Activated B cell treated with CpG ODN at 0.5 μM for 24 hours (primary cell): ENCODE measurements at regions of chr16 and their contacts with region 1.

Region 1: GRCh38 chr16:71894921-71895678 is at the start of gene IST1:
- DNase-seq: peak; percentile 91
- ATAC-seq: peak; percentile 90
- H3K4me3 Mint-ChIP-seq: peak within 1 kb of the TSS; percentile 96
- H3K27ac Mint-ChIP-seq: peak within 1 kb of the TSS; percentile 94
- H3K4me1 Mint-ChIP-seq: peaks cover 30% of the 10 kb centered on the region
- H3K27me3 Mint-ChIP-seq: no peaks in the 10 kb centered on the region
- CTCF ChIP-seq: no peak
- total RNA-seq, gene IST1: 199 and 206 TPM in 2 replicates

Region 2: GRCh38 chr16:71461686-71462648 is 433.1 kb before region 1 on chr16 and contains the start of gene ZNF23:
- CTCF ChIA-PET with region 1: no interaction called
- POLR2A ChIA-PET with region 1: interaction called, 3 read pairs
- intact Hi-C with region 1: loop called (anchors 5 kb)
- DNase-seq: peak; percentile 90
- ATAC-seq: peak; percentile 97
- H3K4me3 Mint-ChIP-seq: peak within 1 kb of the TSS; percentile 93
- H3K27ac Mint-ChIP-seq: peak within 1 kb of the TSS; percentile 94
- H3K4me1 Mint-ChIP-seq: peaks cover 22% of the 10 kb centered on the region
- H3K27me3 Mint-ChIP-seq: no peaks in the 10 kb centered on the region
- CTCF ChIP-seq: no peak
- total RNA-seq, gene ZNF23: 13.3 and 14.6 TPM in 2 replicates

Region 3: GRCh38 chr16:71808593-71809459 is 86.3 kb before region 1 on chr16 and contains the start of gene AP1G1:
- CTCF ChIA-PET with region 1: no interaction called
- POLR2A ChIA-PET with region 1: interaction called, 73 read pairs
- intact Hi-C with region 1: loop called (anchors 1 kb)
- DNase-seq: peak; percentile 79
- ATAC-seq: peak; percentile 86
- H3K4me3 Mint-ChIP-seq: peak within 1 kb of the TSS; percentile 98
- H3K27ac Mint-ChIP-seq: peak within 1 kb of the TSS; percentile 100
- H3K4me1 Mint-ChIP-seq: peaks cover 35% of the 10 kb centered on the region
- H3K27me3 Mint-ChIP-seq: no peaks in the 10 kb centered on the region
- CTCF ChIP-seq: no peak
- total RNA-seq, gene AP1G1: 112 and 120 TPM in 2 replicates

Region 4: DNA sequence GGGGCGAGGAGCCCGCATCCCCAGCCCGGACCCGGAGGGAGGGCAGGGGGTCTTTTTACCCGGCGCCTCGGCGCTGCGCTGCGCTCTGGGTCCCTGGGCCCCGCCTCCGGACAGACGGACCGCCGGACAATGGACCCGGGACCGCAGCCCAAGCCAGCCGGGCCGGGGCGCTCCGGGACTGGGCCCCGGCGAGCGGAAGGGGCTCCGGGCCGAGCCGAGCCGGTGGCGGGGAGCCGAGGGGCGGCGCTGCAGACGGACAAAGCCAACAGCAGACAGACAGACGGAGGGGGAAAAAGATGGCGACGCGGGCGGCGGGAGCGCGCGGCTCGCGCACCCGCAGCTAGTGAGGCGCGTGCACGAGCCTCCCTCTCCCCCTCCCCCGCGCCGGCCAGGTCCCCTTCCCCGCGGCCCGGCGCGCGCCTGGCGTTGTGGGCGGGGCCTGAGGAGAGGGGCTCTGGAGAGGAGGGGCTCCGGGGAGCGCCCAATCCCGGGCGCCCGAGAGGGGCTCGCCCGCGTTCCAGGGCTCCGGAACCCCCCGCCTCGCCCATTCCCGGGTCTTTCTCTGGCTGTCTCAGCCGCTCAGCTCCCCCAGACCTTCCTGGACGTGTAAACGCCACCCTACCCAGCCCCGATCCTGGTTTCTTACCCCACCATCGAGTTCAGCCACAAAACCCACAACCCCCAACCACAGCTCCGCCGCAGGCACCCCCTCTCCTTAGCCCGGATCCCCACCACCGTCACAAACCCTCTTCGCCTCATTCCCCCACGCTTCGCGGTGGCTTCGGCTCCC is 11.1 kb before region 1 on chr16 and contains the start of gene ZNF821:
- CTCF ChIA-PET with region 1: interaction called, 8 read pairs
- POLR2A ChIA-PET with region 1: interaction called, 144 read pairs
- intact Hi-C with region 1: loop called (anchors 1 kb)
- DNase-seq: peak; percentile 81
- ATAC-seq: peak; percentile 75
- H3K4me3 Mint-ChIP-seq: peak within 1 kb of the TSS; percentile 98
- H3K27ac Mint-ChIP-seq: peak within 1 kb of the TSS; percentile 94
- H3K4me1 Mint-ChIP-seq: peaks cover 52% of the 10 kb centered on the region
- H3K27me3 Mint-ChIP-seq: no peaks in the 10 kb centered on the region
- CTCF ChIP-seq: no peak
- total RNA-seq, gene ZNF821: 10.6 and 13.6 TPM in 2 replicates

Region 5: DNA sequence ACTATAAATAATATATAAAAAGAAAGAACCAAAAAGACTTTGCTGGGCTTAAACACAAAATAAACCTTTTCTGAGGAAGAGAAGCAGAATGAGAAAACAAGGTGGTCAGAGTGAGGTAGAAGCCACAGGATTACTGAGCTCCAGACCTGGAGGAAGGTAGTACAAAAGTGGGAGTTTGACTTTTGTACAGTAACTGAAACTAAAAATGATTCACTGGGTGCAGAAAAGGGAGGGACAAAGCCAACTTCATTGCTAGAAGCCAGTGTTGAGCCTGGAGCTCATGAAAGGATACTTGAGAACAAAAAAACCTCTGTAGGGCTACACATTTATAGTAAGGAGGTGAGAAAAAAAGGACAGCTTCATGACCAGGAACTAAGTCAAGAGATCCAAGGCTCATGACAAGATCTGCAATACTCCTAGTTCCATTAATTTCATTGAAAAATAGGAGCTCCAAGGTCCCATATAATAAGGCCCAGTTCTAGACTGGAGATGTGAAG is 59.6 kb after region 1 on chr16:
- CTCF ChIA-PET with region 1: interaction called, 3 read pairs
- POLR2A ChIA-PET with region 1: interaction called, 10 read pairs
- intact Hi-C with region 1: no loop called
- DNase-seq: no peak
- ATAC-seq: no peak
- H3K4me3 Mint-ChIP-seq: no peak overlapping the region
- H3K27ac Mint-ChIP-seq: no peak overlapping the region
- H3K4me1 Mint-ChIP-seq: peaks cover 29% of the 10 kb centered on the region
- H3K27me3 Mint-ChIP-seq: no peaks in the 10 kb centered on the region
- CTCF ChIP-seq: no peak

Region 6: GRCh38 chr16:71974068-71974818 is 79.1 kb after region 1 on chr16:
- CTCF ChIA-PET with region 1: no interaction called
- POLR2A ChIA-PET with region 1: no interaction called
- intact Hi-C with region 1: no loop called
- DNase-seq: no peak
- ATAC-seq: no peak
- H3K4me3 Mint-ChIP-seq: no peak overlapping the region
- H3K27ac Mint-ChIP-seq: no peak overlapping the region
- H3K4me1 Mint-ChIP-seq: no peaks in the 10 kb centered on the region
- H3K27me3 Mint-ChIP-seq: peaks cover 4% of the 10 kb centered on the region
- CTCF ChIP-seq: no peak

Region 7: DNA sequence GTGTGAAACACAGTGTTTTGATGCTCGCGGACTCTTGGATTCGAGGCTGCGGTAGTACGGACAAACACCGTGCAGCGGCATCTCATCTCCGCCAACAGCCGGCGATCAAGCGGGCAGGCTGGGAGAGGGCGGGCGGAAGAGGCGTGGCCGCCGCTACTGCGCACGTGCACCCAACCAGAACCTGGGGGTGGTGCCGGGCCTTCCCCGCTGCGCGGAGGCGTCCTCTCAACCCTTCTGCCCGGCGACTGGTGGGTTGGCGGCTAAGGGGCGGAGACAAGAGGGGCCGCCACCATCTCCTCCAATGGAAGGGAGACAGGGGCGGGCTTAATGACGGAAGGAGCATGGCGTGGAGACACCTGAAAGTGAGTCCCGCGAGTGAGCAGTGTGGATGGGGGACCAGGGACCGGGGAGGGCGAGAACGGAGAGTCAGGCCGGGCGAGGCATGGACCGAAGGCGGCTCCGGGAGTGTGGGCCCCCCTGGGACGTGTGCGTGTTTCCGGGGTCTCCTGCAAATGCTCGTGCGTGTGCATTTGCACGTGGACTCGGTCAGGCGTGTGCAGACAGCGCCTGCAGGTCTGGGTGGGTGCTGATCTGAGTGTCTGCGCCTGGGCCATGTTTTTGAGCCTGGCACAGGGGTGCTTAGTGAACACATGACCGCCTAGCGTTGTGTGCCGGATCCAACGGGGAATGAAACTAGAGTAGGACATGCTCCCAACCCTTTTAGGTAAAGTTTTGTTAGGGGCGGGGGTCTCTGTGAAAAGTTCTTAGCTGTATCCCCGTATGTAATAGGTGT is 113.5 kb after region 1 on chr16 and contains the start of gene DHODH:
- CTCF ChIA-PET with region 1: no interaction called
- POLR2A ChIA-PET with region 1: no interaction called
- intact Hi-C with region 1: loop called (anchors 2 kb)
- DNase-seq: peak; percentile 92
- ATAC-seq: peak; percentile 98
- H3K4me3 Mint-ChIP-seq: peak within 1 kb of the TSS; percentile 91
- H3K27ac Mint-ChIP-seq: peak within 1 kb of the TSS; percentile 91
- H3K4me1 Mint-ChIP-seq: peaks cover 18% of the 10 kb centered on the region
- H3K27me3 Mint-ChIP-seq: peaks cover 2% of the 10 kb centered on the region
- CTCF ChIP-seq: no peak
- total RNA-seq, gene DHODH: 12.0 and 13.0 TPM in 2 replicates

Region 8: GRCh38 chr16:72568502-72568901 is 673.4 kb after region 1 on chr16:
- CTCF ChIA-PET with region 1: no interaction called
- POLR2A ChIA-PET with region 1: interaction called, 18 read pairs
- intact Hi-C with region 1: no loop called
- DNase-seq: no peak
- ATAC-seq: no peak
- H3K4me3 Mint-ChIP-seq: no peak overlapping the region
- H3K27ac Mint-ChIP-seq: no peak overlapping the region
- H3K4me1 Mint-ChIP-seq: peaks cover 4% of the 10 kb centered on the region
- H3K27me3 Mint-ChIP-seq: no peaks in the 10 kb centered on the region
- CTCF ChIP-seq: no peak